Dendritic cell treated with granulocyte-macrophage colony-stimulating factor and Interleukin-4, amounts not matched to agents 40 ng/mL and 50 ng/mL, for 4 days (primary cell): ENCODE measurements at regions of chr13 and their contacts with region 1.

Region 1: DNA sequence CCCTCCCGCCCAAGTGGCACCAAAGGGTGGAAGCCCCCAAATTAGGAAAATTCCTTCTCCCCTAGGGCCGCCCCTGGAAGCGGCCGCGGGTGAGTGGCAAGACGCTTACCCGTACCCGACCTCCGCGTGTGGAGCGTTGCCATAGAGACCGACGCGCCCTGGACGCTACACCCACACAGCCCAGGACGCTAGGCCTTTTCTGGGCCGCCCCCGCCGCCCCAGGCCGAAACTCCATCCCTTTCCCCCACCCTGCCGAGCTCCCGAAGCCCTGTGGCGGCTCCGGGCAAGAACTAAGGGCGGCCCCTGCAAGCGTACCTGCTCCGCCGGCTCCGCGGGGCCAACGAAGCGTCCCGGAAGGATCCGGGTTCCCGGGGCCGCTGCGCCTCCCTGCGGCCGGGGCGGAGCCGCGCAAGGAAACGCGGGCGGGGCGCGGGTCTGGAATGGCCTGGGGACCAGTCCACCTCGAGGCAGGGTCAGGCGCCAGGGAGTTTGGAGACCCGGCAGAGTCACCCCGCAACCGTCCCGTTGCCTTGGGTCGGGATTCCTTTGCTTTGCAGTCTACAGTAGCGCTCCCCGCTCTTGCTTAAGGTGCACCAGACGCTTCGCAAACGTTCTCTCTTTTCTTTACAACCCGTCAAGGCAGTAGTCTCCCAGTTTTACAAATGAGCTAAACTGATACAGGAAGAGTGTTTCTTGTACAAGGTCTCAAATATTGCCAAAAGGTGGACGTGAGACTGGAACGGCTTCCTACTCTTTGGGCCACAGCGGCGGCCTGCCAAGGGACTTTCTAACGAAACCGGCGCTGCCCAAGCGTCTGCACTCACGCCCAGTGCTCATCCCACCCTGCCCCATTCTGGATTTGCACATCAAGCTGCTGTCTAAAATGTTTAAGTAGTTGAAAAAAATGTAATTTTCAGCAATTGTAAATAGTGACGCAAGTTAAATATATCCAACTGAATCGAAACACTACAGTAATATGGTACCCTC is at the start of gene NEK5:
- H3K4me3 Mint-ChIP-seq: peak within 1 kb of the TSS; percentile 93
- H3K27ac Mint-ChIP-seq: peak within 1 kb of the TSS; percentile 65
- H3K4me1 Mint-ChIP-seq: peaks cover 13% of the 10 kb centered on the region
- H3K27me3 Mint-ChIP-seq: peaks cover 5% of the 10 kb centered on the region

Region 2: DNA sequence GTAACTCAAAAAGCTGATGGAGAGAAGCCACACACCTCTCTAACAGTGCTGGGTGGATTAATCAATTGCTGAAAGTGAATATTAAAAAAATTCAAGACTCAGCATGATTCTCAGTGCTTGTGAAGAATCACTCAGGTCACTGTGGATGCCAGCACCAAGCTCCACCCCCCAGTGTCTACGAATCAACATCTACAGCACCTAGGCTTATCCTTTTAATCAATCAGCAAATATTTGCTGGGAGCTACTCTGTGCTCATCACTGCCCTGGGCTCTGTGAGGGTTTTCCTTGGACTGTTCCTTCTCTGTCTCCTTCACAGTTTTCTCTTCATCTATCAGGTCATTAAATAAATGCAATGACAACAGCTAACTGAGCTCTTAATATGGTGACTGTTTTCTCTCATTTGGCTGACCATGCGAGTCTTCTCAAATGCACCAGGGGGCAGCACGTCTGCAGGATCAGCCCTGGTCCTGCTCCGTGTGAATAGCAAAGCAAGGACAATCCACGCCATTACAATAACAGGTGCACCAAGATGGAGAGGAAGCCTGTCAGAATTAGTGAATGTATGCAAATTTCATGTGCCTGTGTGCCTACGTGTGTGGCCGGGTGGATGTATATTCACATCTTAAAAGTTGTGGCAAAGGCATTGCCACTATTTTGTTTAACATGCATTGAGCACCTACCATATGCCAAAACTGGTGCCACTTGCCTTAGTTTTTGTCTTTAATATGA is 1003.3 kb before region 1 on chr13:
- intact Hi-C with region 1: loop called (anchors 5 kb)
- H3K4me3 Mint-ChIP-seq: no peak overlapping the region
- H3K27ac Mint-ChIP-seq: no peak overlapping the region
- H3K4me1 Mint-ChIP-seq: no peaks in the 10 kb centered on the region
- H3K27me3 Mint-ChIP-seq: peaks cover 8% of the 10 kb centered on the region

Region 3: DNA sequence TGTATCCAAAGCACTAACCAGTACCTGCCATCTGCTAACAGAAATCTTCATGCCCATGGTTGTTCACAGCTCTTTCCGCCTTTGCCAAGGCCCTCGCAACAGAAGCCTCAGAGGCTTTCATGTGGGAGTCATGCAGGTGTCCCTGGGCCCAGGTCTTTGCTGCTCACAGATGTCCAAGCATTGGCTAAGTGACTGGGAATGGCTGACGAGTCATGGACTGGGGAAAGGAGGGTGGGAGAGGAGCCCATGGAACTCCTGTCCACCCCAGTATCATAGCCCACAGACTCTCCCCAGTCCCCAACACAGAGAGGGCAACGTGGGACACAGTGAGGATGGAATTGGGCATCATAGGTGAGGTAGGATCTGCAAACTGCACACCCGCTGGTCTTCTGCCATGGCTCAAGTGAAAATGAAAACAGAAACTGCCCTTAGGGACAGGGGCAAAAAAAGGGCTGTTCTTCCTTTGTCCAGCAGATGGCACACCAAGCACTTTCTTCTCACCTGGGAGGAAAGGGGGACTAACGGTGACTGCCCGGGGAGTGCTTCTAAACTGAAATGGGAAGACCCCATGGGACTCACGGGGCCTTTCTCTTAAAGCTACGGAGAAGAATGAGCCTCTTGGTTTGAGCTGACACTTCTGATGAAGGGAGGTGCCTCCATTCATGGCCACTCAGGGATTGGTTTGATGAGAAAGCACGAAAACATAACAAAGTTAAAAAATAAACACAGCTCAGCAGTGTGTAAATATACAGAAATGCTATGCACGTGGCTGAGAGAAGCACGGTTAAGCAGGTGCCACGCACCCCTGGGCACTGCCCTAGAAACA is 314.0 kb before region 1 on chr13:
- intact Hi-C with region 1: loop called (anchors 2 kb)
- H3K4me3 Mint-ChIP-seq: peak overlapping the region; percentile 35
- H3K27ac Mint-ChIP-seq: peak overlapping the region; percentile 10
- H3K4me1 Mint-ChIP-seq: peaks cover 59% of the 10 kb centered on the region
- H3K27me3 Mint-ChIP-seq: no peaks in the 10 kb centered on the region

Region 4: DNA sequence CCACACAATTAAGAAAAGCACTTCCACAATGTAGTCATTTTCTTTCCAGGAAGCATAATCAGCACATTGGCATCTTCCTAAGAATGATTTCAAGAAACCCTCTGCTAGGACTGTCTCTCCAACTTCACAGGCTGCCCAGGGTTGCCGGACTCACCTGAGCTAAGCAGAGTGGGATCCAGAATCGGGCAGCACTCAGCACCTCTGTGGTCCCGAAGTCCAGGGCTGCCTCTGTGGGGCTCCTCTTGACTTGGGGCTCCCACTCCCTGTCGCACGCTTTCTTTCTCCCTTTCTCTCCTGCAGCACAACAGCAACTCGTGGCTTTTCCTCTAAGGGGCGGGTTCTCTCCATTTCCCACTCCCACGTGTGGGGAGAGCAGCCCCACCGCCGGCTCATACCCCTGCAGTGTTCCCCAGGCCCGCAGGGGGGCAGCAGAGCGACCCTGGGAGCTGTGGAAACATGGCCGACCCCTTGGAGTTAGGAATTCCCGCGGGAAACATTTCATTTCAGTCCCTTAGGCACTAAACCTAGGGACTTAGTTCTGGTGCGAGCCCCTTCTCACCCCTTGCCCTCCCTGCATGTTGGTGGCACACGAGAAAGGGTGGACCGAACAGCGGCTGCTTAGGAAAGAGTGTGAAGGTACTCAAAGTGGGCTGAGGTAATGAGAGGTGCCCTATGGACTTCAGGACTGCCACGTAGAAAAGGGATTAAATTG is 284.0 kb before region 1 on chr13 and contains the start of gene TMEM272:
- intact Hi-C with region 1: loop called (anchors 5 kb)
- H3K4me3 Mint-ChIP-seq: peak within 1 kb of the TSS; percentile 41
- H3K27ac Mint-ChIP-seq: no peak within 1 kb of the TSS
- H3K4me1 Mint-ChIP-seq: peaks cover 17% of the 10 kb centered on the region
- H3K27me3 Mint-ChIP-seq: peaks cover 9% of the 10 kb centered on the region

Region 5: GRCh38 chr13:51895906-51896888 is 232.8 kb before region 1 on chr13:
- intact Hi-C with region 1: loop called (anchors 1 kb)
- H3K4me3 Mint-ChIP-seq: no peak overlapping the region
- H3K27ac Mint-ChIP-seq: no peak overlapping the region
- H3K4me1 Mint-ChIP-seq: no peaks in the 10 kb centered on the region
- H3K27me3 Mint-ChIP-seq: peaks cover 5% of the 10 kb centered on the region

Region 6: DNA sequence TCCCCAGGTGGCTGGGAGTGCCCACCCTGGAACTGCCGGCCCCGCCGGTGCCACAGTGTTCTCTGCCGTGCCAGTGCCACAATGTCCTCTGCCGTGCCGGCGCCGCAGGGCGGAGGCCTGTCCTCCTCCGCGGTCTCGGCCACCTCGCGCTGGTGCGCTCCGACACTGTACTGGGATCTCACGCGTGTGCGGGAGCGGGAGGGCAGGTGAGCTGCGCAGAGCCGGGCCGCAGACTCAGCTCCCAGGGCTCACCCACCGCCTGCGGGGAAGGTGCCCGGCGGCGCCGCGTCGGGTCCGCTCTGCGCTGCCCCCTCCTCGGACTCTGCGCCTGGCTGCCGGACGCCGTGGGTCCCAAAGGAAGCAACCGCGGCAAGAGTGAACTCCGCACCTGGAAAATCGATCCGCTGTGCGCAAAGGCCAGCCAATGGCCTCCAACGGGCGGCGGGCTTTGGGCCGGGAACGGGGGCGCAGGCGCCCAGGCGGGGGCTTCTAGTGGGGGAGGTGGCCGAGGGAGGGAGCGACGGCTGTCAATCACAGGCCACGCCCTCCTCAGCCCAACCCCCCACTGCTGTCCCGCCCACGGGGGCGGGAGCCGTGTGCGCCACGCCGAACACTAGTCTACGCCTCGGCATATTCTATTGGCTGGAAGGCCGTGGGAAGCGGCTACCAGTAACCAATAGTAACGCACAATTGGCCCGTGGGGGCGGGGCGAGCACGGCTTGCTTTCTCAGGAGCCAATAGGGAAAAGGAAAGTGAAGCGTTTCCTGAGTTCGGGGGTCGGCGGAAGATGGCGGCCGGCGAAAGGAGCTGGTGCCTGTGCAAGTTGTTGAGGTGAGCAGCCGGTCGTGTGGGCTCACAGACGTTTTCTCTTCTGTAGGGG is 117.1 kb before region 1 on chr13 and contains the start of gene ALG11:
- intact Hi-C with region 1: loop called (anchors 5 kb)
- H3K4me3 Mint-ChIP-seq: peak within 1 kb of the TSS; percentile 97
- H3K27ac Mint-ChIP-seq: peak within 1 kb of the TSS; percentile 95
- H3K4me1 Mint-ChIP-seq: peaks cover 16% of the 10 kb centered on the region
- H3K27me3 Mint-ChIP-seq: peaks cover 35% of the 10 kb centered on the region

Region 7: DNA sequence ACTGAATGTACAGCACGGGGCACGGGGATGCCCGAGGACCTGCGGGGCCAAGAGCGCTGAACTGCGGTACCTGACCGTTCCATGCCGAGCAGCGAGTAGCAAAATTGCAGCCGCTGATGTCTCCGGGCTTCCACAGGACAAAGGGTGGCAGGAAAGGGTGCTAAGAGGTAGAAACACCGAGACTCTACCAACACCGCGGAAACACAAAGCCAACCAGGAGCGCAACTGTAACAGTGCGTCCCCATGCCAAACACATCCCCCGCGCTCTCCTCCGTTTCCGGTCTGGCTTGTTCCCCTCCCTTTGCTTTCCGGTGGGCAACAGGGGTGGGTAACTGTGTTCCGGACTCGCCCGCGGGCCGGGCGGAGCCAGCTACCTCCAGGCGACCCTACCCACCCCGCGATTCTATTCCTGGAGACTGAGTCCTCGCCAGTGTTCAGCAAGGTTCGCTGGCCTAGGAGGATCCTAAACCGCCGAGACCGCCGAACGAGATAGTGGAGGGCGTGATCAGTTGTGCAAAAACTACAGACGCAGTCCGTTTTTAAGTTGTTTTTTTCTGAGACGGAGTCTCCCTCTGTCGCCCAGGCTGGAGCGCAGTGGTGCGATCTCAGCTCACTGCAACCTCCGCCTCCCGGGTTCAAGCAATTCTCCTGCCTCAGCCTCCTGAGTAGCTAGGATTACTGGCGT is 65.3 kb after region 1 on chr13:
- intact Hi-C with region 1: loop called (anchors 2 kb)
- H3K4me3 Mint-ChIP-seq: peak overlapping the region; percentile 96
- H3K27ac Mint-ChIP-seq: peak overlapping the region; percentile 93
- H3K4me1 Mint-ChIP-seq: peaks cover 12% of the 10 kb centered on the region
- H3K27me3 Mint-ChIP-seq: no peaks in the 10 kb centered on the region

Region 8: GRCh38 chr13:52395704-52396103 is 266.7 kb after region 1 on chr13:
- intact Hi-C with region 1: no loop called
- H3K4me3 Mint-ChIP-seq: no peak overlapping the region
- H3K27ac Mint-ChIP-seq: no peak overlapping the region
- H3K4me1 Mint-ChIP-seq: peaks cover 17% of the 10 kb centered on the region
- H3K27me3 Mint-ChIP-seq: peaks cover 2% of the 10 kb centered on the region